Prostate gland (tissue), 2 donors: ENCODE measurements at regions of chr9 and their contacts with region 1.

Region 1: DNA sequence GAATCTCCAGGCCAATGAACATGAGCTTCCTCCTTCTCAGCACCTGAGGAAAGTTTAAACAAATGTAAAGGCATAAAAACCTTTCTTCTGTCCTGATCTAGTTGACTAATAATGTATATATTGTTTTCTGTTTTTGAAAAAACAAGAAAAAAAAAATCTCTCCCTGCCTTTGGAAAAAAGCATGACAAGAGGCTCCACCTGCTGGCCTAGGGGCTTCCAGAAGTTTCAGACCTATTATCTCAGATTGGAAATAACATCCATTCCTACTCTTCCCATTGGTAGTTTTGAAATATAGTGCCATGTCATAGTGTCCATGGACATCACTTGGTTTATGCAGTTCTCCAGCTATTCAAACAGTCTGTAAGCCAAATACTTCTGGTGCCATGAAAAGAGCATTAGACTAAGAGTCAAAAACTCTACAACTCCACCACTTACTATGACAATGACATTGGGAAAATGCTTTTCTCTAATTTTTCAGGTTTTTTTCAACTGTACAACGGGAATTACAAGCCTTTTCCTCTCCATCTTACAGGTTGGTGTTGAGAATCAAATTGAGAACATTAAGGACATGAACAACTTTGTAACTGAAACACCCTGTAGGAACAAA is 409.6 kb upstream of the MPDZ start:
- DNase-seq: no peak
- H3K4me3 ChIP-seq: no peak overlapping the region
- H3K27ac ChIP-seq: no peak overlapping the region
- H3K4me1 ChIP-seq: no peaks in the 10 kb centered on the region
- H3K27me3 ChIP-seq: no peaks in the 10 kb centered on the region
- CTCF ChIP-seq: peak in 3 of 4 experiments; percentile 25 to 43 (median 30)
- POLR2A ChIP-seq: no peak

Region 2: GRCh38 chr9:13446938-13447842 is 241.9 kb before region 1 on chr9:
- intact Hi-C with region 1: loop called (anchors 10 kb)
- DNase-seq: no peak
- H3K4me3 ChIP-seq: no peak overlapping the region
- H3K27ac ChIP-seq: no peak overlapping the region
- H3K4me1 ChIP-seq: no peaks in the 10 kb centered on the region
- H3K27me3 ChIP-seq: no peaks in the 10 kb centered on the region
- CTCF ChIP-seq: peak in 2 of 4 experiments; percentile 10 to 19
- POLR2A ChIP-seq: no peak

Region 3: GRCh38 chr9:13575558-13575957 is 113.5 kb before region 1 on chr9:
- intact Hi-C with region 1: no loop called
- DNase-seq: no peak
- H3K4me3 ChIP-seq: no peak overlapping the region
- H3K27ac ChIP-seq: no peak overlapping the region
- H3K4me1 ChIP-seq: no peaks in the 10 kb centered on the region
- H3K27me3 ChIP-seq: no peaks in the 10 kb centered on the region
- CTCF ChIP-seq: no peak
- POLR2A ChIP-seq: no peak